ENCODE measurements at regions of chr7 and their contacts with region 1.

Region 1: GRCh38 chr7:21898265-21898930 is 47.3 kb downstream of the CDCA7L start:
- DNase-seq: peak in 5 of 10 donors; percentile 20 to 54 (median 33)
- ATAC-seq: peak; percentile 91 to 92
- H3K4me3 Mint-ChIP-seq: peak overlapping the region; percentile 75 to 92 (median 86)
- H3K27ac Mint-ChIP-seq: peak overlapping the region; percentile 94 to 99 (median 98)
- H3K4me1 Mint-ChIP-seq: peaks cover 15 to 26% (median 24%) of the 10 kb centered on the region in 4 donors
- H3K27me3 Mint-ChIP-seq: no peaks in the 10 kb centered on the region

Region 2: GRCh38 chr7:21923658-21924057 is 25.3 kb after region 1 on chr7:
- POLR2A ChIA-PET with region 1: no interaction called
- DNase-seq: no peak
- ATAC-seq: no peak
- H3K4me3 Mint-ChIP-seq: no peak overlapping the region
- H3K27ac Mint-ChIP-seq: no peak overlapping the region
- H3K4me1 Mint-ChIP-seq: peaks cover 6 to 43% (median 9%) of the 10 kb centered on the region in 4 donors
- H3K27me3 Mint-ChIP-seq: peaks cover 0 to 1% (median 0%) of the 10 kb centered on the region in 5 donors

Region 3: DNA sequence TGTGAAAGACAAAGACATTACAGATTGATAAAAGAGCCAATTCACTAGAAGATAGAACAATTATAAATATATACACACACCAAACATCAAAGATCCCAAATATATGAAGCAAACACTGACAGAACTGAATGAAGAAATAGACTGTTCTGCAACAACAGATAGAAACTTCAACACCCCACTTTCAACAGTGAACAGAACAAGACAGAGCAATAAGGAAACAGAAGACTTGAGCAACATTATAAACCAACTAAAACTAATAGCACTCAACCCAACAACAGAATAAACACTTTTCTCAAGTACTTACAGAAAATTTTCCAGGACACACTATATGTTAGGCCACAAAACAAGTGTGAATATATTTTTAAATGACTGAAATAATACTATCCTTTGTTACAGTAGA is 36.4 kb after region 1 on chr7:
- POLR2A ChIA-PET with region 1: no interaction called
- DNase-seq: no peak
- ATAC-seq: no peak
- H3K4me3 Mint-ChIP-seq: peak overlapping the region in 1 of 10 donors; percentile 22
- H3K27ac Mint-ChIP-seq: peak overlapping the region in 1 of 10 donors; percentile 45
- H3K4me1 Mint-ChIP-seq: peaks cover 11 to 62% (median 24%) of the 10 kb centered on the region in 4 donors
- H3K27me3 Mint-ChIP-seq: no peaks in the 10 kb centered on the region

Region 4: DNA sequence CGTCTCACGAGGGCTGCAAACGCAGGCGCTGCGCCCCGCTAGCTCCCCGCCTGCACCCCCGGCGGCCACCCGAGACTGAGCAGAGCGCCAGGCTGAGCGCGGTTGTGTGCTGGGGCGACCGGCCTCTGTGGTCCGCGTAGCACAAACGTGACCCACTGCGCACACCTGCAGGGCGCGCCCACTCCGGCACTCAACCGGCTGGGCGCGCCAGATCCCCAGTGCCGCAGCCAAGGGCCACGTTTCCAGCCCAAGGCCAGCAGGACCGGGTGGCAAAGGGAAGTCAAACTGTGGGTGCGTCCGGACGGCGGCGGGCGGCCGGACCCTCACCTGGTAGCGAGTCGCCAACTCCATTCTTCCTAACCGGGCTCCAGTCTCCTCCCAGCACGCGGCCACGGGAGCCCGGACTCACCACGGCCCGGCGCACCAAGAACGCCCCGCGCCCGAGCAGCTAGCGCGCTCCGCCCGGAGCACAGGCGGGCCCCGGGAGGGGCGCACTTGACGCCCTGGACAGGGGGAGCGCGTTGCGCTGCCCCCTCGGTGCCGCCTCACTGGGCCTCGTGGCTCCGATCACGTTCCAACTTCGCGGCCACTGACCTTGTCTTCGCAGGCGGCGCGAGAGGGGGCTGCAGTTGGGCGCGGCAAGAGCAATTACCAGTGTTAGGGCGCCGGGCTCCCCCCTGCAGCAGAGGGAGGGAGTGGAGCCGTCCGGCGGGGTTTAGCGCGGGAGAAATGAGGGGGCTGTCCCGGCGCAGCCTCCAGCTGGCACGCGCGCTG is 47.2 kb after region 1 on chr7 and contains the start of gene CDCA7L:
- POLR2A ChIA-PET with region 1: interaction called, 19 read pairs
- DNase-seq: peak; percentile 34 to 76 (median 57)
- ATAC-seq: peak; percentile 84 to 85
- H3K4me3 Mint-ChIP-seq: peak within 1 kb of the TSS; percentile 84 to 93 (median 91)
- H3K27ac Mint-ChIP-seq: peak within 1 kb of the TSS; percentile 16 to 90 (median 77)
- H3K4me1 Mint-ChIP-seq: peaks cover 14 to 66% (median 56%) of the 10 kb centered on the region in 4 donors
- H3K27me3 Mint-ChIP-seq: no peaks in the 10 kb centered on the region
- polyA plus RNA-seq, gene CDCA7L: 23.9 to 38.5 (median 37.3) TPM

Measured in naive thymus-derived CD8-positive, alpha-beta T cell (primary cell).